ENCODE measurements at regions of chr5 and their contacts with region 1.

Region 1: GRCh38 chr5:103211576-103212561 is 46.7 kb upstream of the MACIR start:
- DNase-seq: no peak
- H3K4me3 Mint-ChIP-seq: no peak overlapping the region
- H3K27ac Mint-ChIP-seq: peak overlapping the region; percentile 67
- H3K4me1 Mint-ChIP-seq: peaks cover 5% of the 10 kb centered on the region
- H3K27me3 Mint-ChIP-seq: no peaks in the 10 kb centered on the region
- CTCF ChIP-seq: no peak

Region 2: DNA sequence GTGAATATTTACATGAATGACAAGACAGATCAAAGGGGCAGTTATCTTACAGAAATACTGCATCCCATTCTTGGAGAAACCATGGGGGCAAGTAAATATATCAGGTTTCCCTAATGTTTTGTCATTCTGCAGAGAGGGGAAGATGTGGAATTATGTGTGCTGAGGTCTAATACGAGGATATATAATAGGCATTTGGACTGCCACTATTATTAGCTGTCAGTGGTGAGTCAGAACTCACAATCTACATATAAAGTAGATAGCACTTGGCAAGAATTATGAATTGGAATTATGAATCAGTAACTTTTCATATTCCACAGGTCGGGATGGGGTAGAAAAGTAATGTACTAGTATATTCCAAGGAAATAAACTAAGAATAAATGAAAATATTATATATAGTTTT is 213.6 kb before region 1 on chr5:
- CTCF ChIA-PET with region 1: no interaction called
- POLR2A ChIA-PET with region 1: no interaction called
- intact Hi-C with region 1: no loop called
- DNase-seq: no peak
- H3K4me3 Mint-ChIP-seq: no peak overlapping the region
- H3K27ac Mint-ChIP-seq: no peak overlapping the region
- H3K4me1 Mint-ChIP-seq: no peaks in the 10 kb centered on the region
- H3K27me3 Mint-ChIP-seq: no peaks in the 10 kb centered on the region
- CTCF ChIP-seq: no peak

Region 3: GRCh38 chr5:103224118-103224893 is 12.4 kb after region 1 on chr5:
- CTCF ChIA-PET with region 1: interaction called, 14 read pairs
- POLR2A ChIA-PET with region 1: no interaction called
- intact Hi-C with region 1: no loop called
- DNase-seq: peak; percentile 74
- H3K4me3 Mint-ChIP-seq: no peak overlapping the region
- H3K27ac Mint-ChIP-seq: no peak overlapping the region
- H3K4me1 Mint-ChIP-seq: no peaks in the 10 kb centered on the region
- H3K27me3 Mint-ChIP-seq: no peaks in the 10 kb centered on the region
- CTCF ChIP-seq: peak; percentile 65

Measured in MCF 10A (cell line).